Endothelial cell of umbilical vein (primary cell): ENCODE measurements at regions of chr6 and their contacts with region 1.

Region 1: GRCh38 chr6:47047479-47048407 is 5.6 kb upstream of the ADGRF1 start:
- DNase-seq: peak; percentile 94
- H3K4me3 ChIP-seq: no peak overlapping the region
- H3K27ac ChIP-seq: peak overlapping the region; percentile 86
- H3K4me1 ChIP-seq: peaks cover 46% of the 10 kb centered on the region
- H3K27me3 ChIP-seq: no peaks in the 10 kb centered on the region
- CTCF ChIP-seq: peak; percentile 73 to 83
- POLR2A ChIP-seq: no peak

Region 2: DNA sequence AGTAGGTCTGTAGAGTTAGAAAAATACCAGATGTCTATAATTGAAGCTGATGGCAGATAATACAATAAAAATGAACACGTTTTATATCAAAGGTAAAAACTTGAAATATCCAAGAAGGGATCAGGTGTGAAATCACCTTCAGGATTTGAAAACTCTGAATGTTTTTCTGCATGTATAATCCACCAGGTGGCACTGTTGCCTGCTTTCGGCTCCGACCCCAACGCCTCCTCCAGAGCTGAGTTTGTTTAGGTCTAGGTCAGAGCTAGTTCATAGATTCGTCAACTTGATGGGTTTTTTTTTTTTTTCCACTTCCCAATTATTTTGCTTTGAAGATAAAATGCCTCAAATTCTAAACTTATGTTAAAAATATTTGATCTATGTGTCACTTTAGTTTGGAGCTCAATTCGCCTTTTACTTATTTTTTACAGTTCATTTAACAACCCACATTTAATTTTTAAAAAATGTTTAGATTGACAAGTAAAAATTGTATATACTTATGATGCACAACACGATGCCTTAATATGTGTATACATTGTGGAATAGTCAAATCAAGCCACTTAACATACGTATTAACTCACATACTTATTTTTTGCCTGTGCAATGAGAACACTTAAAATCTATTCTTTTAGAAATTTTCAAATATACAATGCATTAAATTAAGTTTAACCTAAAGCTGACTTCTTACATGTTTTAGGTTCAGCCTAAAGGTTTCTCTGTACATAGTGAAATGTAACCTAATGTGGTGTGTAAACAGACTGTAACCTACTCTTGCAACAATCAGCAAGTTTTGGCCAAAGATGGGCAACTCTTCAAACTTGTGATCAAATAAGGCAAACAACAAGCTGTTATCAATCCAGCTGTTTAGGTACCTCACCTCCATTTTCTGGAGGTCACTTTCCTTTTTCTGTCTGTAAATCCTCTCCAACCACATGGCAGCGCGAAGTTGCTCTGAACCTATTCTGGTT is 957.3 kb before region 1 on chr6:
- CTCF ChIA-PET with region 1: interaction called, 4 read pairs
- POLR2A ChIA-PET with region 1: no interaction called
- dilution Hi-C with region 1: no loop called
- intact Hi-C with region 1: loop called (anchors 1 kb)
- DNase-seq: peak; percentile 58
- H3K4me3 ChIP-seq: no peak overlapping the region
- H3K27ac ChIP-seq: no peak overlapping the region
- H3K4me1 ChIP-seq: no peaks in the 10 kb centered on the region
- H3K27me3 ChIP-seq: peaks cover 5 to 13% of the 10 kb centered on the region in 2 experiments
- CTCF ChIP-seq: peak; percentile 59 to 73
- POLR2A ChIP-seq: no peak

Region 3: GRCh38 chr6:46419576-46420002 is 628.2 kb before region 1 on chr6:
- CTCF ChIA-PET with region 1: interaction called, 6 read pairs
- POLR2A ChIA-PET with region 1: no interaction called
- dilution Hi-C with region 1: no loop called
- intact Hi-C with region 1: loop called (anchors 1 kb)
- DNase-seq: peak; percentile 63
- H3K4me3 ChIP-seq: no peak overlapping the region
- H3K27ac ChIP-seq: no peak overlapping the region
- H3K4me1 ChIP-seq: no peaks in the 10 kb centered on the region
- H3K27me3 ChIP-seq: peaks cover 4 to 12% of the 10 kb centered on the region in 2 experiments
- CTCF ChIP-seq: peak; percentile 46 to 63
- POLR2A ChIP-seq: no peak

Region 4: DNA sequence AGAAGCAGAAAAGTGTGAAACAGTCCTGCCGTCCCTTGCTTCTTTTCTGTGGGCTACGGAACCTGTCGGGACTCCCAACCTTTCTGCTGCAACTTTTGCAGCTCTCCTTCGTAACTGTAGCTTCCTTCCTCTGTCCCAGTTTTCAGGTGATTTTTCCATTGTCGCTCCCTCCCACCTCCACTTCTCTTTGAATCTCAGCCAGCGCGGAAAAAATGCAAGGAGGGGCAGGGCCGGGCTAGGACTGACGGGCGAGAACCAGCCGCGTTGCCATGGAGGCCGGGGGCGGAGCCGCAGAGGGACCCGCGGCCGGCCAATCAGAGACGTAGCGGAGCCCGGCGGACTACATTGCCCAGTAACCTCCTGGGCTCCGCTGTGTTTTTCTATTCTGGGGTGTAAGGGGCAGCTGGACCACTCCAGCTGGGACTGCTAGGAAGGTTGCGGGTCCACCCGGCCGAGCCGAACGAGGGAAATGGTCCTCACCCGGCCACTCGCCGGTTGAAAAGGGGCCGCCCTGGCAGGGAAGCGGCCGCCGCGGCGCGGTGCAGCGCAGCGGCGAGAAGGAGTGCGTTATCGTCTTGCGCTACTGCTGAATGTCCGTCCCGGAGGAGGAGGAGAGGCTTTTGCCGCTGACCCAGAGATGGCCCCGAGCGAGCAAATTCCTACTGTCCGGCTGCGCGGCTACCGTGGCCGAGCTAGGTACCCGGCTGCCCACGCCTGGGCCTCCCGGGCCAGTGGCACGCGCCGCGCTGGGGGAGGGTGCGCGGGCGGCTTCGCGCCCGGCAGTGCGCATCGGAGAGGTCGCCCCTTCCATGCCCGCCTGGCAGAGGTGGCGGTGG is 394.9 kb before region 1 on chr6 and contains the starts of genes CYP39A1 and SLC25A27:
- CTCF ChIA-PET with region 1: no interaction called
- POLR2A ChIA-PET with region 1: no interaction called
- dilution Hi-C with region 1: no loop called
- intact Hi-C with region 1: loop called (anchors 5 kb)
- DNase-seq: peak; percentile 89
- H3K4me3 ChIP-seq: peak within 1 kb of the TSS; percentile 47 to 84 (median 65)
- H3K27ac ChIP-seq: no peak within 1 kb of the TSS
- H3K4me1 ChIP-seq: peaks cover 5% of the 10 kb centered on the region
- H3K27me3 ChIP-seq: peaks cover 0 to 4% of the 10 kb centered on the region in 2 experiments
- CTCF ChIP-seq: no peak
- POLR2A ChIP-seq: no peak
- total RNA-seq, gene CYP39A1: not detected in 2 replicates
- total RNA-seq, gene SLC25A27: 3.4 and 4.0 TPM in 2 replicates

Region 5: GRCh38 chr6:46760925-46761324 is 286.8 kb before region 1 on chr6:
- CTCF ChIA-PET with region 1: no interaction called
- POLR2A ChIA-PET with region 1: no interaction called
- dilution Hi-C with region 1: no loop called
- intact Hi-C with region 1: no loop called
- DNase-seq: no peak
- H3K4me3 ChIP-seq: no peak overlapping the region
- H3K27ac ChIP-seq: no peak overlapping the region
- H3K4me1 ChIP-seq: no peaks in the 10 kb centered on the region
- H3K27me3 ChIP-seq: peaks cover 0 to 5% of the 10 kb centered on the region in 2 experiments
- CTCF ChIP-seq: no peak
- POLR2A ChIP-seq: no peak

Region 6: DNA sequence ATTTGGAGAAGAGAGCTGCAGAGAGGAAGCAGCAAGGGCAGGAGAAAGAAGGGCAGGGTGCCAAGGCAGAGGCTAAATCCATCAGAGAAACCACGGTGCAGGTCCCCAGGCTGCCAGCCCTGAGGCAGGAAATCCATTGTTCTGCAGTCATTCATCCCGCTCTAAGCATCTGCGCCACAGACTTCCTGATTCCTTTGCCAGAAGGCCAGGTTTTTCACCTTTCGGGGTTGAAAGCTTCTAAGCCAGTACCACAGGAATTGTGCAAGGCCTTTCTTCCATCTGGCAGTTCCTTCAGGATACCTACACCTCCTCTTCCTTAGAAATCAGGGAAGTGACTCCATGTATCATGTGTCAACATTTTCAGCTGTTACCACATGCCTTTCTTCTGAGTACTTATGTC is 171.6 kb before region 1 on chr6:
- CTCF ChIA-PET with region 1: interaction called, 7 read pairs
- POLR2A ChIA-PET with region 1: no interaction called
- dilution Hi-C with region 1: no loop called
- intact Hi-C with region 1: loop called (anchors 1 kb)
- DNase-seq: peak; percentile 97
- H3K4me3 ChIP-seq: no peak overlapping the region
- H3K27ac ChIP-seq: peak overlapping the region; percentile 53
- H3K4me1 ChIP-seq: peaks cover 18% of the 10 kb centered on the region
- H3K27me3 ChIP-seq: no peaks in the 10 kb centered on the region
- CTCF ChIP-seq: no peak
- POLR2A ChIP-seq: no peak

Region 7: GRCh38 chr6:46993846-46994245 is 53.9 kb before region 1 on chr6:
- CTCF ChIA-PET with region 1: interaction called, 22 read pairs
- POLR2A ChIA-PET with region 1: interaction called, 4 read pairs
- dilution Hi-C with region 1: no loop called
- intact Hi-C with region 1: loop called (anchors 1 kb)
- DNase-seq: peak; percentile 84
- H3K4me3 ChIP-seq: no peak overlapping the region
- H3K27ac ChIP-seq: peak overlapping the region; percentile 83
- H3K4me1 ChIP-seq: peaks cover 38% of the 10 kb centered on the region
- H3K27me3 ChIP-seq: no peaks in the 10 kb centered on the region
- CTCF ChIP-seq: no peak
- POLR2A ChIP-seq: no peak